Dendritic cell treated with granulocyte-macrophage colony-stimulating factor and Interleukin-4, amounts not matched to agents 40 ng/mL and 50 ng/mL, for 4 days (primary cell): ENCODE measurements at regions of chr17 and their contacts with region 1.

Region 1: DNA sequence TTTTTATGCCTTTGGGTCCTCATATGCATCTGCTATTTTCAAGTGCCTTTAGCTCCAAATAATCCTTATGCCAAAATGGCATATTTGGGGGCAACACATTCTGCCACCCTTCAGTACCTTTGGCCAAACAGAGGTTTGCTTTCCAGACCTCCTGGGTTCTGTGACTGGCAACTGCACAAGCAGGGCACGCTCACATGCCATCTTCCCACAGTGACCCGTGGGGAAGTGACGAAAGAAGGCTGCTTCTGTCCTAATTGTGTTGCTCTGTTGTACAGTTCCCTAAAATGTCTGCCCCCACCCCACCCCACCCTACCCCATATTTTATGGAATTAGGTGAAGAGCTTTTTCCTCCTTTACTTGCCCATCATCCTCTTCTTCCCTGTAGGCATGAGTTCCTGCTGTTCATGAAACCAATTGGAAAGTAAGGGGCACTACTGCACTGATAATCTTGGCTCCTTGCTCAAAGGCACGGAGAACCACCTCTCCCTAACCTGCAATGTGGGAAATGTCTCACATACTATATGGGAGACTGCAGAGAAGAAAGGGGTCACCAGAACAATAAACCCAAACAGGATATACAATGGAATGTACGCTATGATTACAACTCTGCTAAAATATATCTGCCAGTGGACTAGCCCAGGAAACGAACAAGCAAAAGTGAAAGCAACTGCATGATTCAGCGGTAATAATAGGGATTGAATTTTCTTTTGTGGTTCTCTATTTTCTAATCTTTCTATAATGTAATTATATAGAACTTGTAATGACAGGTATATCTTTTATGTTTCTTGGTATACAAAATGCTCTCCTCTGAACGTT is 3.3 kb upstream of the SLFN12L start:
- H3K4me3 Mint-ChIP-seq: peak overlapping the region; percentile 72
- H3K27ac Mint-ChIP-seq: peak overlapping the region; percentile 95
- H3K4me1 Mint-ChIP-seq: peaks cover 50% of the 10 kb centered on the region
- H3K27me3 Mint-ChIP-seq: no peaks in the 10 kb centered on the region

Region 2: DNA sequence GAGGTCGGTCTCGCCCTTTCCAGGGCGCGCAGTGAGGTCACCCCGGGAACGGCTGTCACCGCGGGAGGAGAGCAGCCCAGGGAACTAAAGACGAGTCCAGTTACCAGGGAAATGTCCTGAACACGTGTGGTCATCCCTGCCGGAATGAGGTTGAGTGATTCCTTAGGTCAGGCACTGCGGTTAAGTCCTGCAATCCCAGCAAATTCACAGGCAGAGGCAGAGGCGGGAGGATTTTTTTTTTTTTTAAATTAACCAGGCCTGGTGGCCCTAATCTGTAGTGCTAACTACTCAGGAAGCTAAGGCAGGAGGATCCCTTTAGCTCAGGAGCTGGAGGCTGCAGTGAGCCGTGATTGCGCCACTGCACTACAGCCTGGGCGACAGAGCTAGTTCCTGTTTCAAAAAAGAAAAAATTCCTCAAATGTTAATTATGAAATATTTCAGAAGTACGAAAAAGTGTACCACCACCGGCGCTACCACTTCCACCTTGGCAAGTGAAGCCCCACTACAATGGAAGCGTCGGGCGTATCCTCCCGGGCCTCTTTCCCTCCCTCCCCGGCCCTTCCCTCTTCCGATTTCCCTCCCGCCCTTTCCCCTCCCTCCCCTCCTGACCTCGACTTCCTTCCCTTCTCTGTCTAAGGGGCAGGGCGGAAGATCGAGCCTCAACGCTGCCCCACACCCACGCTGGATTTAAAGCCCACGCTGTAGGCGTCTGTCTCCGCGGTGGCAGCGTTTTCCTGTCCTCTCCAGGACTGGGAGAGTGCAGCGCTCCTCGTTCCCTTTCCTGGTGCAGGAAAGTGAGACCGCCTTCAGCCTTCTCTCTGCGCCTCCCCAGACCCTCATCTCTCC is 194.6 kb before region 1 on chr17:
- intact Hi-C with region 1: loop called (anchors 10 kb)
- H3K4me3 Mint-ChIP-seq: peak overlapping the region; percentile 75
- H3K27ac Mint-ChIP-seq: peak overlapping the region; percentile 93
- H3K4me1 Mint-ChIP-seq: peaks cover 67% of the 10 kb centered on the region
- H3K27me3 Mint-ChIP-seq: no peaks in the 10 kb centered on the region

Region 3: GRCh38 chr17:35578197-35578928 is 37.6 kb after region 1 on chr17 and contains the start of gene PEX12:
- intact Hi-C with region 1: loop called (anchors 5 kb)
- H3K4me3 Mint-ChIP-seq: peak within 1 kb of the TSS; percentile 80
- H3K27ac Mint-ChIP-seq: peak within 1 kb of the TSS; percentile 80
- H3K4me1 Mint-ChIP-seq: peaks cover 13% of the 10 kb centered on the region
- H3K27me3 Mint-ChIP-seq: peaks cover 4% of the 10 kb centered on the region

Region 4: DNA sequence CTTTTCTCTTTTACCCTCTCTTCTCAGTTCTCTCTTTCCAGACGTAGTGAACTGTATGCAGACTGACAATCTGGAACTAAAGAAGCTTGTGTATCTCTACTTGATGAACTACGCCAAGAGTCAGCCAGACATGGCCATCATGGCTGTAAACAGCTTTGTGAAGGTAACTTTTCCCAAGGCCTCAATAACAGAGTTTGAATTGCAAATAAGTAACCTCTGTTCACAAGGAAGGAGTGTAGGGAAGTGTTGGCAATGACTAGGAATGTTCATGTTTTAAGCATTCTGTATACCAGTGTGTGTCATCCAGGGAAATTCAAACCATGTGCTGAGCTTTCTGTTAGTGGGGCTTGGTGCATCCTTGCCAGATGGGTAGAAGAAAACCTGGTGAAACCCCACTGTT is 64.9 kb after region 1 on chr17:
- intact Hi-C with region 1: no loop called
- H3K4me3 Mint-ChIP-seq: no peak overlapping the region
- H3K27ac Mint-ChIP-seq: no peak overlapping the region
- H3K4me1 Mint-ChIP-seq: no peaks in the 10 kb centered on the region
- H3K27me3 Mint-ChIP-seq: no peaks in the 10 kb centered on the region

Region 5: DNA sequence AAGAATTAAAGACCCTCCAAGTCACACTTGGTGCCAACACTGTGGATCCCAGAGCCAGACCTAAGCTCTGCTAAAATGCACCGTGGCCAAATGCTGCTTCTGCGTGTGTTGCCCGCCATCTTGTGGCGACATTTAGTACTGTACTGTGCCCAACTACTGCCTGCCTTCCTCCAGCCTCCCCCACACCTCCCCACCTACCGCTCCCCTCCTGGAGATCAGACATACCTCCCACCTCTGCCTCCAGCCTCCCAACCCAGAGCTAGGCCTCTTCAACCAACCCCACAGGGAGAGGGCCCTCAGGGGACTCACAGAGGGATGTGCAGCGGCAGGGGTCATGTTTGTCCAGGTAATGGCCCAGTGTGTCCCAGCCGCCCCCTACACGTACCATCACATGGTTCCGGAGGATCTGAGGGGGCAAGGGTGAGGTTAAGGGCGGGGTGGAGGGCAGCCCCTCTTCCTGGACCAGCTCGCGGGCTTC is 206.8 kb after region 1 on chr17:
- intact Hi-C with region 1: loop called (anchors 5 kb)
- H3K4me3 Mint-ChIP-seq: no peak overlapping the region
- H3K27ac Mint-ChIP-seq: no peak overlapping the region
- H3K4me1 Mint-ChIP-seq: peaks cover 21% of the 10 kb centered on the region
- H3K27me3 Mint-ChIP-seq: peaks cover 57% of the 10 kb centered on the region